HepG2 (cell line): ENCODE measurements at regions of chr19 and their contacts with region 1.

Region 1: GRCh38 chr19:46404055-46404752 is 9.2 kb downstream of the CCDC8 start:
- DNase-seq: peak; percentile 69
- ATAC-seq: peak; percentile 80
- H3K4me3 ChIP-seq: peak overlapping the region; percentile 62 to 85 (median 76)
- H3K27ac ChIP-seq: peak overlapping the region; percentile 86
- H3K4me1 ChIP-seq: peaks cover 38% of the 10 kb centered on the region
- H3K27me3 ChIP-seq: no peaks in the 10 kb centered on the region
- CTCF ChIP-seq: peak; percentile 74
- EP300 ChIP-seq: no peak
- POLR2A ChIP-seq: peak in 1 of 2 experiments; percentile 48; a peak in 1 of 4 replicates
- RAD21 ChIP-seq: peak; percentile 20; the same call in 1 of the 2 replicates

Region 2: GRCh38 chr19:46364359-46364758 is 39.8 kb before region 1 on chr19:
- CTCF ChIA-PET with region 1: no interaction called
- POLR2A ChIA-PET with region 1: no interaction called
- in situ Hi-C with region 1: no loop called
- intact Hi-C with region 1: no loop called
- DNase-seq: no peak
- ATAC-seq: no peak
- H3K4me3 ChIP-seq: no peak overlapping the region
- H3K27ac ChIP-seq: no peak overlapping the region
- H3K4me1 ChIP-seq: peaks cover 13% of the 10 kb centered on the region
- H3K27me3 ChIP-seq: no peaks in the 10 kb centered on the region
- CTCF ChIP-seq: no peak
- EP300 ChIP-seq: no peak
- POLR2A ChIP-seq: no peak
- RAD21 ChIP-seq: no peak

Region 3: GRCh38 chr19:46431824-46432223 is 27.6 kb after region 1 on chr19:
- CTCF ChIA-PET with region 1: interaction called, 6 read pairs
- POLR2A ChIA-PET with region 1: interaction called, 5 read pairs
- in situ Hi-C with region 1: no loop called
- intact Hi-C with region 1: loop called (anchors 5 kb)
- DNase-seq: no peak
- ATAC-seq: peak; percentile 76
- H3K4me3 ChIP-seq: no peak overlapping the region; a peak in 1 of 6 replicates
- H3K27ac ChIP-seq: no peak overlapping the region
- H3K4me1 ChIP-seq: peaks cover 15% of the 10 kb centered on the region; the same call in 1 of the 2 replicates
- H3K27me3 ChIP-seq: peaks cover 0 to 16% of the 10 kb centered on the region in 2 experiments; a peak in 3 of 5 replicates
- CTCF ChIP-seq: peak; percentile 68
- EP300 ChIP-seq: no peak
- POLR2A ChIP-seq: no peak
- RAD21 ChIP-seq: peak; percentile 65

Region 4: DNA sequence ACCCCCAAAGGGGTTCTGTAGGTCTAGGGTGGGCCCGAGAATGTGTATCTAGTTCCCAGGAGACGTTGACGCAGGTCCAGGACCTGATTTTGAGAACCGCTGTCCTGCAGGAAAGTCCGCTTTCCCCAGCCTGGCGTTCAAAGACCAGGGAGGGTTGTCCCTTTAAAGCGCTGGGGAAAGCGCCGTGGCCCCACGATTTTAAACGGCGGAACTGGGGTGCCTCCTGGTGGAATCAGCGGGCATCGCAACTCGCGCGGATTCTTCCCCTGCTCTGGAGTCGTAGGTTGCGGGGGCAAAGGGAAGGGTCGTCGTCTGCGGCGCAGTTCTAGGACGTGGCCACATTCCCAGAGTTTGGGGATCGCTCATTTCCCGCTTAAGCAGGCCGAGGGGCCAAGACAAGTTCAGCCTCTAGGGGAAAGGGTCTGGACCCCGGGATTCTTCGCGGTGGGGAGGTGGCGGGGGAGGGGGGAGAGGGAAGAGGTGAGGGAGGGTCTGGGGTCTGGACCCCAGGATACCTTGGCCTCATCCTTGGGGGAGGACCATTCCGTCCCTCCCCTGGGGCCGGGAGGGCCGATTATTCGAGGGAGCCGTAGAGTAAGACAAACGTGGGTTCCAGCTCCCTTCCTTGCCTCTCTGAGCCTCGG is 83.7 kb after region 1 on chr19:
- CTCF ChIA-PET with region 1: interaction called, 76 read pairs
- POLR2A ChIA-PET with region 1: no interaction called
- in situ Hi-C with region 1: loop called (anchors 5 kb)
- intact Hi-C with region 1: loop called (anchors 1 kb)
- DNase-seq: peak; percentile 46
- ATAC-seq: peak; percentile 85
- H3K4me3 ChIP-seq: peak overlapping the region in 1 of 3 experiments; percentile 72; a peak in 3 of 6 replicates
- H3K27ac ChIP-seq: no peak overlapping the region
- H3K4me1 ChIP-seq: peaks cover 15% of the 10 kb centered on the region; the same call in 1 of the 2 replicates
- H3K27me3 ChIP-seq: peaks cover 3 to 35% of the 10 kb centered on the region in 2 experiments; a peak in 4 of 5 replicates
- CTCF ChIP-seq: peak; percentile 98
- EP300 ChIP-seq: no peak
- POLR2A ChIP-seq: no peak
- RAD21 ChIP-seq: peak; percentile 96

Region 5: DNA sequence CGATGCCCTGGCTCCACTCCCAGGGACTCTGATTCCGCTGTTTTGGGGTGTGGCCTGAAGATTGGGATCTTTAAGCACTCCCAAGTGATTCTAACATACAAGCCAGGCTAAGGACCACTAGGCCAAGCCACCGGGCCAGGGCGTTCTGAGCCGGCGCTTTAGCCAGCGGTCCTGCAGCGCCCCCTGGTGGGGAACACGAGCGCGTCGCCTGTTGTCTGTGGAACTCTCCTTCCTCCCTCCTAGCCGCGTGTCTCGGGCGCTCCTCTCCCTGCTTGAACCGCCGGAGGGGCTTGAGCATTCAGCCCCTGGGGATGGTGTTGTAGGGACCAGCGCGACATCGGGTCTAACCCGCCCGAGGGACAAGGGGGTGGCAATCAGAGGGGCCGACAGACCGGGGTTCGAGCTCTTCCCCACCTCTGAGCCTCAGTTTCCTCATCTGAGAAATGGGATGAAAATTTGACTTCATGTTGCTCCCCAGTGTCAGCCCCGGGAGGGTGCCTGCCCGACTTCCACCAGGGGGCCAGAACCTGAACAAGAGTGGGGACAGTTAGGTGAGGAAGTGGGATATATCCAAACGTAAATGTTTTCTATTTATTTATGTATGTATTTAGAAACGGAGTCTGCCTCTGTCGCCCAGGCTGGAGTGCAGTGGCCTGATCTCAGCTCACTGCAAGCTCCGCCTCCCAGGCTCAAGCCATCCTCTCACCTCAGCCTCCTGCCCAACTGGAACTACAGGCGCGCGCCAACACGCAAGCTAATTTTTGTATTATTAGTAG is 109.4 kb after region 1 on chr19:
- CTCF ChIA-PET with region 1: interaction called, 14 read pairs
- POLR2A ChIA-PET with region 1: no interaction called
- in situ Hi-C with region 1: no loop called
- intact Hi-C with region 1: loop called (anchors 5 kb)
- DNase-seq: peak; percentile 44
- ATAC-seq: peak; percentile 91
- H3K4me3 ChIP-seq: no peak overlapping the region
- H3K27ac ChIP-seq: no peak overlapping the region
- H3K4me1 ChIP-seq: no peaks in the 10 kb centered on the region
- H3K27me3 ChIP-seq: no peaks in the 10 kb centered on the region
- CTCF ChIP-seq: peak; percentile 97
- EP300 ChIP-seq: no peak
- POLR2A ChIP-seq: no peak
- RAD21 ChIP-seq: peak; percentile 91